Sigmoid colon (tissue), 7 donors: ENCODE measurements at regions of chr19 and their contacts with region 1.

Region 1: GRCh38 chr19:21586311-21587116 is 81.1 kb downstream of the ZNF429 start:
- DNase-seq: no peak
- H3K4me3 ChIP-seq: peak overlapping the region; percentile 49 to 83 (median 74)
- H3K27ac ChIP-seq: peak overlapping the region; percentile 41 to 75 (median 64)
- H3K4me1 ChIP-seq: peaks cover 0 to 15% (median 5%) of the 10 kb centered on the region in 4 donors
- H3K27me3 ChIP-seq: no peaks in the 10 kb centered on the region
- CTCF ChIP-seq: no peak
- EP300 ChIP-seq: no peak
- POLR2A ChIP-seq: no peak

Region 2: DNA sequence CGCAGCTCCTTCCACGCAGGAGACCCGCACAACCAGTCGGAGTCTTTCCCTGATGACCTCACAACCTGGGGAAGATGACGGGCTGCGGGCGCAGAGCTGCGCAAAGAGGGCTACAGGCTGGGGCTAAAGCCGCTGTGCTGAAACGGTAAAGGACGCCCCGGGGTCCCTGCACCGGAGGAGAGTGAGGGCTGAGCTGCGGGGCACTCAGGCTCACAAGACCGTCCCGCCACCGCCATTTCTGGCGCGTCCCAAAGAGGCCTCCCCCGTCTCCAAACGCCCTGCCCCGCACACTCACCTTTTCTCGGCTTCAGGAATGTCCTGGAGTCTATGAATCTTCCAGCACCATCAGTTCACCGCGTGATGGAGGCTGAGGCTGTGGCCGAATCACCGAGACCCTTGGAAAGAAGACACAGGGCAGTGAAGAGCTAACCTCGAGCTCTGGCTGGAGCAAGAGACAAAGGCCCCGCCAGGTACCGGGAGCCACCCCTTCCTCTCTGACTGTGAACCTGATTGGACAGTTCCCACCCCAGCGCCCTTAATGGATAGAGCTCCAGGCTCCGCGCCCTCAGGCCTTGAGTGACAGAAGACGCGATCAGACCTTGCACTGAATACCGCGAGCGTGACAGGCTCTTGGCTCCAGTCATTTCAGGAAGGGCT is 122.9 kb before region 1 on chr19:
- intact Hi-C with region 1: no loop called
- DNase-seq: no peak
- H3K4me3 ChIP-seq: no peak overlapping the region
- H3K27ac ChIP-seq: no peak overlapping the region
- H3K4me1 ChIP-seq: no peaks in the 10 kb centered on the region
- H3K27me3 ChIP-seq: peaks cover 0 to 15% (median 6%) of the 10 kb centered on the region in 3 donors
- CTCF ChIP-seq: no peak
- EP300 ChIP-seq: no peak
- POLR2A ChIP-seq: no peak

Region 3: DNA sequence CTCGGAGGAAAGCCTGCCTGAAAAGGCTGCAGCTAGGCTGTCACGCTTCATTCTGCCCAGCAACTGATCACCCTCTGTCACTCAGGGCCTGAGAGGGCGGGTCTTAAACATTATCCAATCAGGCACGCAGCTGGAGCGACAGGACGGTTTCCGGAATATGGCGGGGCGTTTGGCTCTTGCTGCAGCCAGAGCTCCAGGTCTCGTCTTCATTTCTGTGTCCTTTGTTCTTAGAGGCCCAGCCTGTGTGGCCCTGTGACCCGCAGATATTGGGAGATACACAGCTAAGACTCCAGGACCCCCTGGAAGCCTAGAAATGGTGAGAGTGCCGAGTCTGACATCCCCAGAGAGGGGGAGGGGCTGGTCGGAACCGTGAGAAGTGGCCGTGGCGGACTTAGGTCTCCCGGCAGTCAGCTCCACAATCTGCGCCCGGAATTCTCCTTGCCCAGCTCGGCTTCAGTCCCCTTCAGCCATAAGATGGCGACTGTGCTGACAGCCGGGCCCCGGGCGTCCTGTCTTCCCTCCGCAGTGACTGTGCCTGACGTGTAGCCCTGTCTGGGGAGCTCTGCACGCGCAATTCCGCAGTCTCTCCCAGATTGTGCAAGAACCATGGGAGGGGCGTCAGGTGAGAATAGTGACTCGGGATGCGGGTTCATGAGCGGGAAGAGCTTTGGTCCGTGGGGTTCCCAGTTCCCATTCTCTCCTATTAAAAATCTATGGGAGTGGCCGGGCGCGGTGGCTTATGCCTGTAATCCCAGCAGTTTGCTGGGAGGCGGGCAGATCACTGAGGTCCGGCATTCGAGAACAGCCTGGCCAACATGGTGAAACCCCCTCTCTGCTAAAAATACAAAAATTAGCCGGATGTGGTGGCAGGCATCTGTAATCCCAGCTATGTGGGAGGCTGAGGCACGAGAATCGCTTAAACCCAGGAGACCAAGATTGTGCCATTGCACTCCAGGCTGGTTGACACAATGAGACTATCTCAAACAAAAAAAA is 80.8 kb before region 1 on chr19 and contains the start of gene ZNF429:
- intact Hi-C with region 1: loop called (anchors 5 kb)
- DNase-seq: peak; percentile 96
- H3K4me3 ChIP-seq: peak within 1 kb of the TSS; percentile 63 to 85 (median 66)
- H3K27ac ChIP-seq: peak within 1 kb of the TSS; percentile 88 to 96 (median 90)
- H3K4me1 ChIP-seq: peaks cover 0 to 30% (median 17%) of the 10 kb centered on the region in 4 donors
- H3K27me3 ChIP-seq: no peaks in the 10 kb centered on the region
- CTCF ChIP-seq: no peak
- EP300 ChIP-seq: no peak
- POLR2A ChIP-seq: peak; percentile 57 to 82
- total RNA-seq, gene ZNF429: 10.9 to 15.7 (median 12.5) TPM

Region 4: DNA sequence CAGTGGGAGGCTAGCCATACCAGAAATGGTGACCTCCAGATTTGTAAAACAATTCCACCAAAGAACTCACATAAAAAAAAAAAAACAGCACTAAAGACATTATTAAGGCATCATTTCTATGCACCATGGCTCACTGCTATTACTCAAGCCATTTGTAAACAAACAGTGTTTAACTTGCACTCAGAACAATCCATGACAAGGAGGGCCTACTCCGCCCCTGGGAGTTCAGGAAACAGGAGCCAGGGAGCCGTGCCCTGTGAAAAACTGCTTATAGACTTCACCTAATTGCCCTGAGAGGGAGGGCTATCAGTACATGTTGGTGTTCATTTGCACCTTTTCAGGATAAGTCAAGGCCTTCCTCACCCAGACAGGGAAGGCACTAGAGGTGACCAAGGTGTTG is 22.1 kb after region 1 on chr19:
- intact Hi-C with region 1: no loop called
- DNase-seq: no peak
- H3K4me3 ChIP-seq: no peak overlapping the region
- H3K27ac ChIP-seq: peak overlapping the region in 1 of 4 donors; percentile 48
- H3K4me1 ChIP-seq: peaks cover 0 to 21% (median 10%) of the 10 kb centered on the region in 4 donors
- H3K27me3 ChIP-seq: no peaks in the 10 kb centered on the region
- CTCF ChIP-seq: no peak
- EP300 ChIP-seq: no peak
- POLR2A ChIP-seq: no peak